WTC11 (cell line): ENCODE measurements at regions of chr2 and their contacts with region 1.

Region 1: DNA sequence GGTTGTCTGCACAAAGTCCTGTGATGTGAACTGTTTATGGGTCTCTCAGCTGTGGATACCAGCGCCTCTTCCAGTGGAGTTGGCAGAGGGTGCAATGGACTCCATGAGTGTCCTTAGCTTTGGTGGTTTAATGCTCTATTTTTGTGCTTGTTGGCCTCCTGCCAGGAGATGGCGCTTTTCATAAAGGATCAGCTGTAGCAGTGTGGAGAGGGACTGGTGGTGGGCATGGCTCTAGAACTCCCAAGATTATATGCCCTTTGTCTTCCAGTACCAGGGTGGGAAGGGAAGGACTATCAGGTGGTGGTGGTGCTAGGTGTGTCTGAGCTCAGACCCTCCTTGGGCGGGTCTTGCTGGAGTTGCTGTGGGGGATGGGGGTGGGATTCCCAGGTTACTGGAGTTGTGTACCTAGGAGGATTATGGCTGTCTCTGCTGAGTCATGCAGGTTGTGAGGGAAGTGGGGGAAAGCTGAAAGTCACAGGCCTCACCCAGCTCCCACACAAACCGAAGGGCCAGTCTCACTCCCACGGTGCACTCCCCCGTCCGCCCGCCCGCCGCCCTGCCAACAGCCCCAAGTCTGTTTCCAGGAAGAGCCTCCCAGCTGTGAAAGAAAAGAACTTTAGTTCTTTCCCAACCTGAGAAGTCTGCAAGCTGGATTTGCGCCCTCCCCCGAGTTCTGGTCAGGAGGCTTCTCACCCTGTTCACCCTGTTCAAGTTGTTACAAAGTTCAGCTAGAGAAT is 108.1 kb downstream of the MARCO start:
- DNase-seq: peak; percentile 65
- ATAC-seq: peak; percentile 39
- H3K4me3 Mint-ChIP-seq: no peak overlapping the region
- H3K27ac Mint-ChIP-seq: no peak overlapping the region
- H3K4me1 Mint-ChIP-seq: peaks cover 27% of the 10 kb centered on the region
- H3K27me3 Mint-ChIP-seq: peaks cover 5% of the 10 kb centered on the region
- CTCF ChIP-seq: no peak

Region 2: DNA sequence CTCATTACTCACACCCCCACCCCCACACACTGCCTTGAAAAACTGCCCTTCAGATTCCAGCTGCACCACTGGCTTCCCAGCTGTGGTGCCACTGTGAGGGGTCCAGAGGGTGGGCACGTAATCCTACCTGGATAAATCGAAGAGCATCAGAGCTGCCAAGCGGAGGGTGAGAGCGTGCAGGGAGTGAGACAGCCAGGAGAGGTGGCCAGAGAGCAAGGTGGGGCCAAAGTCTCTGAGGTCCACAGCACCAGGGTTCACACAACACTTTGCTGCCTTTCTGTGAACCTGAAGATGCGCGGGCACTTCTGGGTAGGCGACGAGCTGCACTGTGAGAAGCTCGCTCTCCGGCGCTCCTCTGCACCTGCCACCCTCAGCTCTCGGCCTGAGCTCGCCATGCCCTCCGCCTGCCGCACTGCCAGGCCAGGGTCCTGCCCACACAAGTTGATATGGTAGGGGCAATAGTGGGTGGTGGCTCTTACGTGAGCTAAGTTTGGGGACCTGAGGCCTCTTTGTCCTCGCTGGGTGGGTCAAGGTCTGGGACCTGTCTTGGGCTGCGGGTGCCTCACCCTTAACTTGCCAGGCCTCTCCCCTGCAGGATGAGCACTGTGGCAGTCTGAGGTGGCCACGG is 24.3 kb before region 1 on chr2:
- CTCF ChIA-PET with region 1: interaction called, 10 read pairs
- POLR2A ChIA-PET with region 1: no interaction called
- DNase-seq: no peak
- ATAC-seq: peak; percentile 62
- H3K4me3 Mint-ChIP-seq: no peak overlapping the region
- H3K27ac Mint-ChIP-seq: no peak overlapping the region
- H3K4me1 Mint-ChIP-seq: peaks cover 11% of the 10 kb centered on the region
- H3K27me3 Mint-ChIP-seq: peaks cover 3% of the 10 kb centered on the region; the same call in 1 of the 2 replicates
- CTCF ChIP-seq: no peak

Region 3: DNA sequence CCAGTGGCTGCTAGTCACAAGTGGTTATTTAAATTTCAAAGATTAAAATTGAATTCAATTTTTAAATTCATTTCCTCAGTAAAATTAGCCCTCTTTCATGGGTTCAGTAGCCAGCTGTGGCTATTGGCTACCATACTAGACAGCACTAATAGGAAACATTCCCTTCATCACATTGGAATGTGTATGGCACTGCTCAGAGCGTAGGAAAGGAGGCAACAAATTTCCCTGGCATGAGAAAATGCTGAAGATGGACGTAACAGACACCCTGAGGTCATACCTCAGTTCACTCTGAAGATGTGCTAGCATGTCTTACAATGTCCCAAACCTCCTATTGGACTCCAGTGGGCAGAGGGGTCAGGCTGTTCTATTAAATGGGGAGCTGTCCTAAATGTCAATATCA is 12.0 kb after region 1 on chr2:
- CTCF ChIA-PET with region 1: interaction called, 10 read pairs
- POLR2A ChIA-PET with region 1: no interaction called
- DNase-seq: no peak
- ATAC-seq: no peak
- H3K4me3 Mint-ChIP-seq: no peak overlapping the region
- H3K27ac Mint-ChIP-seq: no peak overlapping the region
- H3K4me1 Mint-ChIP-seq: no peaks in the 10 kb centered on the region
- H3K27me3 Mint-ChIP-seq: peaks cover 6% of the 10 kb centered on the region; the same call in 1 of the 2 replicates
- CTCF ChIP-seq: no peak

Region 4: DNA sequence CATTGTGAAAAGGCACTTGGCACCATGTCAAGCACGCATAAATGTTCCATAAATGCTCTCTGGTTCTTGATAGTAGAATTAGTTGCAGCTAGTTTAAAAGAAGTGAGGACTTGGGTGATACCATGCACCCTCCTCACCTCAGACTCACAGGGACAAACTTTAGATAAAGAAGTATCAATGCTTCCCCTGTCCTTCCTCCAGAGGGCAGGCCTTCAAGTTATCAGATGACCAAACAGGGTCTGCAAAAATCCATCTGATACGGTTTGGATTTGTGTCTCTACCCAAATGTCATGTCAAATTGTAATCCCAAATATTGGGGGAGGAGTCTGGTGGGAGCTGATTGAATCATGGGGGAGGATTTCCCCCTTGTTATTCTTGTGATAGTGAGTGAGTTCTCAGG is 54.3 kb after region 1 on chr2:
- CTCF ChIA-PET with region 1: interaction called, 10 read pairs
- POLR2A ChIA-PET with region 1: no interaction called
- DNase-seq: no peak
- ATAC-seq: peak; percentile 63
- H3K4me3 Mint-ChIP-seq: no peak overlapping the region
- H3K27ac Mint-ChIP-seq: no peak overlapping the region
- H3K4me1 Mint-ChIP-seq: peaks cover 11% of the 10 kb centered on the region
- H3K27me3 Mint-ChIP-seq: peaks cover 6% of the 10 kb centered on the region; the same call in 1 of the 2 replicates
- CTCF ChIP-seq: no peak

Region 5: DNA sequence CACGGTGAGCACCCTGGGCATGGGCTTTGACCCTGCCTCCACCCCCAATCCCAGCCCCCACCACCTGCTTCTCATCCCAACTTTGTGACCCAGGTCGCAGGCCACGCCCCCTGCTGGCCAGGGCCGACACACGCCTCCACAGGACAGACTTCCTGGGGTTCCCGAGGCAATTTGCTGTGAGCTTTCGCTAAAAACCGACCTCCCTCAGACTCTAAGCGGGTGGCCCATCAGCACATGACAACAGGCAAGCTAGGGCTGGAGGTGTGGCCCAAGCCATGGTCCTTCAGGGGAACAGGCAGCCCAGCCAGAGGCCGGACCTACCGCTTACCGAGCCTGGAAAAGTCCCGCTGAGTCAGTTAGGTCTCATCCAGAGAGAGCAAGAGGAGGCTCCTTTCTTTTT is 76.5 kb after region 1 on chr2:
- CTCF ChIA-PET with region 1: interaction called, 21 read pairs
- POLR2A ChIA-PET with region 1: no interaction called
- DNase-seq: peak; percentile 85
- ATAC-seq: peak; percentile 92
- H3K4me3 Mint-ChIP-seq: peak overlapping the region; percentile 54
- H3K27ac Mint-ChIP-seq: no peak overlapping the region
- H3K4me1 Mint-ChIP-seq: peaks cover 46% of the 10 kb centered on the region
- H3K27me3 Mint-ChIP-seq: peaks cover 30% of the 10 kb centered on the region
- CTCF ChIP-seq: peak; percentile 78; the same call in 1 of the 2 replicates